Ascending aorta (tissue), 2 donors: ENCODE measurements at regions of chr10 and their contacts with region 1.

Region 1: DNA sequence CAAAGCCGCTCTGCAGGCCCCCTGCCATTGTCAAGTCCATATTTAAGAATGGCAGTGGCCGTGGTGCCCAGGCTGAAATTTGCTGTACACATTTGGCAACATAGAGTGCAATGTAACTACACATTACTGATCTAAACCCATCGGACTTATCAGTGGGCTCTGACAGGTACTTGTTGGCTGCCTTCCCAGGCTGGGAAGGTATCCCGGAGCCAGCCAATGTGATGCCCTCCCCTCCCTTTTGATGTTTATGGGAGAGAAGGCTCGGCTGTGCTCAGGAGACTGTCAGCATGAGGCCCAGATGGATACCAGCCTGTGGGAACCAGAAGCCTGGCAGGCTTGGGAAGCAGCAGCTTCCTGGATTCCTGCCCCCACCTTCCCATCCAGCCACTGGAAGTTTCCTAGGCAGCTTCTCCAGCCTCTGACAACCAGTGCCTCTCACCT is 146.1 kb upstream of the TCF7L2 start:
- DNase-seq: peak in 1 of 2 donors; percentile 49
- H3K4me3 ChIP-seq: no peak overlapping the region
- H3K27ac ChIP-seq: no peak overlapping the region
- H3K4me1 ChIP-seq: peaks cover 0 to 4% of the 10 kb centered on the region in 2 donors
- H3K27me3 ChIP-seq: no peaks in the 10 kb centered on the region
- CTCF ChIP-seq: no peak

Region 2: GRCh38 chr10:112639298-112639697 is 164.7 kb before region 1 on chr10:
- intact Hi-C with region 1: no loop called
- DNase-seq: no peak
- H3K4me3 ChIP-seq: no peak overlapping the region
- H3K27ac ChIP-seq: no peak overlapping the region
- H3K4me1 ChIP-seq: no peaks in the 10 kb centered on the region
- H3K27me3 ChIP-seq: no peaks in the 10 kb centered on the region
- CTCF ChIP-seq: no peak

Region 3: DNA sequence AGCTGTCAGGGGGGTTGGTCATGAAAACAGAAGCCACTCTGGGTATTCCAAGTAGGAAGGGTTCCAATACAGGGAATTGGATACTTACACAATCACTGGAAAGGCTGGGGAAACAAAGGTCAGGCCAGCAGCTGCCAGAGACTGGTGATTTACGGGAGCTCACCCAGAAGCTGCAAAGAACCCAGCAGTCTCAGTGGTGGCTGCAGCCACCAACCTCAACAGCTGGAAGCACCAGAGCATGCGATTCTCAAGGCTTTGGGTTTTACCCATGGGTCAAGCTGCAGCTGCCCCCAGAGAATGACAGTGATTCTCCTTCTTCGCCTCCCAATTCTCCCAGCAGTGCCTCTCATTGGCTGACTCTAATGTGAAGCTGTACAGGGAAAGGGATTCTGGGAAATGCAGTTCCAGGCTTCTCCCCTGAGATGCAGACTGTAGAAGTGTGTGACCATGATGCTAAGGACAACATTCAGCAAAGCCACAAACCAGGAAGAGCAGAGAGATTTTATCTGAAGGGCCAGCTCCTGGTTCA is 38.9 kb after region 1 on chr10:
- intact Hi-C with region 1: no loop called
- DNase-seq: no peak
- H3K4me3 ChIP-seq: no peak overlapping the region
- H3K27ac ChIP-seq: no peak overlapping the region
- H3K4me1 ChIP-seq: no peaks in the 10 kb centered on the region
- H3K27me3 ChIP-seq: no peaks in the 10 kb centered on the region
- CTCF ChIP-seq: no peak

Region 4: GRCh38 chr10:113011592-113012374 is 207.8 kb after region 1 on chr10:
- intact Hi-C with region 1: loop called (anchors 5 kb)
- DNase-seq: no peak
- H3K4me3 ChIP-seq: no peak overlapping the region
- H3K27ac ChIP-seq: no peak overlapping the region
- H3K4me1 ChIP-seq: peaks cover 0 to 22% of the 10 kb centered on the region in 2 donors
- H3K27me3 ChIP-seq: no peaks in the 10 kb centered on the region
- CTCF ChIP-seq: no peak